Ovary (tissue), 10 donors: ENCODE measurements at regions of chr1 and their contacts with region 1.

Region 1: DNA sequence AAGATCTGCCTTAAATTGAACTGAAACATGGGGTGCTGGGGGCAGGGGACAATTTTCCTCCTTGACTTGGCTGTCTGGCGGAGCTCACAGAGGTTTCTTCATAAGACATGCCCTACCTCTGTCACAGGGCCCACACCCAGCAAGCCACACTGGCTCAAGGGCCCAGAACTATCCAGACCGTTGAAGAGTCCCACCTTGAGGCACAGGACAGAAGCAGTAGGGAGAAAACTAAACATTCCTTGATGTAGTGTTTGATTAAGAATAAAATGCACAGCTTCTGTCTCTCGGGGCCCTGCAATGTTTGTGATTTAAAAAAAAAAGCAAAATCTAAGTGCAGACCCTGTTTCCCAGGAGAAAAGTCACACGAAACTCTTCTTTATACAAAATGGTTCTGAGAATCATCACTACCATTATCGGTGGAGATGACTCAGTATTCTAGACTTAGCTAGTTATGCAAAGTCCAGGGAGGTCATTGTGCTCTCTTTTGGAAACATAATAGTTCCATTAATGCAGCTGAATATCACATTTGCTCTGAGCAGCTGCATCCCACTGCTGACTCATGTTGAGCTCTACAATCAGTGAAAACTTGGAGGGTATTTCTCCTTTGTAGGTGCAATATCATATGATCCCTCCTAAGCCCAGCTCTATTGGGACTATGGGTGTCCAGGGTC is 53.6 kb upstream of the DIRAS3 start:
- DNase-seq: no peak
- H3K4me3 ChIP-seq: no peak overlapping the region
- H3K27ac ChIP-seq: no peak overlapping the region
- H3K4me1 ChIP-seq: peaks cover 3% of the 10 kb centered on the region
- H3K27me3 ChIP-seq: no peaks in the 10 kb centered on the region
- CTCF ChIP-seq: no peak
- EP300 ChIP-seq: no peak
- POLR2A ChIP-seq: no peak

Region 2: DNA sequence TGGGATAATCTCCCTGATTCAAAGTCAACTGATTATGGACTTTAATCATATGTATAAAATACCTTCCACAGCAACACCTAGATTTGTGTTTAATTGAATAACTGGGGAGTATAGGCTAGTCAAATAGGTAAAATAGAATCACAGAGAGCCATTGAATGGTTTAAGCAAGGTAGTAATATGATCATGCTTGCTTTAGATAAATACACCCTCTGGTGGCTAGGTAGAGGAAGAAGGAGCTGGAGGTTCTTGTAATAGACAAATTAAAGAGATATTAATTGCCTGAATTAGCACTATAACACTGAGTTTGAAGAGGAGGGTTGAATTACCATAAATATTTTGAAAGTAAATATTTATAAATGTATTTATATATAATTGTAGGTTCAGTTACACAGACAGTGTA is 93.9 kb before region 1 on chr1:
- intact Hi-C with region 1: loop called in 1 of 4 experiments (anchors 10 kb)
- DNase-seq: no peak
- H3K4me3 ChIP-seq: no peak overlapping the region
- H3K27ac ChIP-seq: no peak overlapping the region
- H3K4me1 ChIP-seq: no peaks in the 10 kb centered on the region
- H3K27me3 ChIP-seq: no peaks in the 10 kb centered on the region
- CTCF ChIP-seq: peak in 1 of 3 donors; percentile 32
- EP300 ChIP-seq: no peak
- POLR2A ChIP-seq: no peak

Region 3: DNA sequence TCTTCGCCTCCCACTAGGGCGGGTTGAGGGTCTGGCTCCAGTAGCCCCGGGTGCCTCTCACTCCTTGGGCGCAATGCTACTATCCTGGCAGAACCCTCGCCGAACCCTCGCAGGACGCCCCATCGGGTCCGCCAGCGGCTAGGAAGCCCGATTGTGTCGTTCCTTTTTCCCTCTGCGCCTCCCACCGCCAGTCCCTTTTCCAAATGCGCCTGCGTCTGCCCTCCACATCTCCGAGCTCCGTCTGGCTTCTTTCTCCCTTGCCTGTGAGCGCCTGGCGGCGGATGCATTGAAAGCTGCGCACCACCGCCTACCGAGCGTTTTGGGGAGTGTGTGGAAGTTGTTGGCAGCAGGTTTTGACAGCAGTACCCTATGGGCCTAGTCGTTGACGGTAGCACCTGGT is 52.5 kb before region 1 on chr1:
- intact Hi-C with region 1: loop called in 1 of 4 experiments (anchors 10 kb)
- DNase-seq: peak; percentile 73 to 83 (median 75)
- H3K4me3 ChIP-seq: peak overlapping the region; percentile 35
- H3K27ac ChIP-seq: peak overlapping the region in 1 of 2 donors; percentile 67
- H3K4me1 ChIP-seq: no peaks in the 10 kb centered on the region
- H3K27me3 ChIP-seq: no peaks in the 10 kb centered on the region
- CTCF ChIP-seq: peak; percentile 19 to 59 (median 53)
- EP300 ChIP-seq: no peak
- POLR2A ChIP-seq: no peak